ENCODE measurements at regions of chr6 and their contacts with region 1.

Region 1: GRCh38 chr6:30219244-30219643 is 6.0 kb upstream of the TRIM26 start:
- DNase-seq: peak; percentile 36
- H3K4me3 Mint-ChIP-seq: no peak overlapping the region
- H3K27ac Mint-ChIP-seq: no peak overlapping the region
- H3K4me1 Mint-ChIP-seq: peaks cover 14% of the 10 kb centered on the region
- H3K27me3 Mint-ChIP-seq: no peaks in the 10 kb centered on the region

Region 2: GRCh38 chr6:30259140-30260035 is 40.1 kb after region 1 on chr6:
- intact Hi-C with region 1: loop called (anchors 5 kb)
- DNase-seq: peak; percentile 48
- H3K4me3 Mint-ChIP-seq: peak overlapping the region; percentile 80
- H3K27ac Mint-ChIP-seq: peak overlapping the region; percentile 46
- H3K4me1 Mint-ChIP-seq: peaks cover 16% of the 10 kb centered on the region
- H3K27me3 Mint-ChIP-seq: peaks cover 32% of the 10 kb centered on the region